Activated CD8-positive, alpha-beta T cell treated with anti-CD3 and anti-CD28 coated beads for 36 hours (primary cell): ENCODE measurements at regions of chr10 and their contacts with region 1.

Region 1: DNA sequence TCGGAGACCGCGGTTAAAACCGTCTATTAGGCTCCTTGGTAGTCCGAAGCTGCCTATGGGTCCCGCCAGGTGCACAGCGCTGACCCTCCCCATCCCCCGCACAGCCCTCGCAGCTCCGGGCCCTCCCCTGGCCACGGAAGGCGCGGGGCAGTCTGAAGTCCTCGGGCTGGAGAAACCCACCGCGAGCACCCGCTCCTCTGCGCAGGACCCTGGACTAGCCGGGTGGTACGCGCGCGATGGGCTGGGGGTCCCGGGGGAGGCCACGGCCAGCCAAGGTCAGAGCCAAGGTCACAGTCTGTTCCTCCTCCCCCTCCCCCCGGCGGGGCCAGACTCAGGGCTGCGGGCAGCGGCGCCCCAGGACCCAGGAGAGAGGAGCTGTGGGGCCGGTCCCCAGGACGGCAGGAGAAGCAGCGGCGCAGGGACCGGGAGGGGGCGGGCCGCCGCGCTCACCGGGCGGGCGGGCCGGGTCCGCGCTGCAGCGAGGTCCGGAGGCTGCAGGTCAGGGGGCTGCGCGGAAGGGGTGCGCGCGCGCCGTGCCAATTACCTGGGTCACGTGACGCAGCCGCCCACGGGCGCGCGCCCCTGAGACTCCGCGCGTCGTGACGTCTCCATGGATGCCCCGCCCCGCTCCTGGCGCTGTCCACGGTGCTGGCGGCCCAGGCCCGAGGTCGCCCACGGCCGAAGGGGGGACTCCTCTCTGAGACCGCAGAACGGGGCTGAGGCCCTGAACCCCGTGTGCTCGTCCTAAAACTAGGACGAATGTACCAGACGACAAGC is at the start of gene OGDHL:
- DNase-seq: peak; percentile 73
- ATAC-seq: peak; percentile 90
- H3K4me3 Mint-ChIP-seq: peak within 1 kb of the TSS; percentile 40
- H3K27ac Mint-ChIP-seq: no peak within 1 kb of the TSS
- H3K4me1 Mint-ChIP-seq: no peaks in the 10 kb centered on the region
- H3K27me3 Mint-ChIP-seq: peaks cover 34% of the 10 kb centered on the region
- CTCF ChIP-seq: no peak
- total RNA-seq, gene OGDHL: 0.40 to 0.68 TPM

Region 2: DNA sequence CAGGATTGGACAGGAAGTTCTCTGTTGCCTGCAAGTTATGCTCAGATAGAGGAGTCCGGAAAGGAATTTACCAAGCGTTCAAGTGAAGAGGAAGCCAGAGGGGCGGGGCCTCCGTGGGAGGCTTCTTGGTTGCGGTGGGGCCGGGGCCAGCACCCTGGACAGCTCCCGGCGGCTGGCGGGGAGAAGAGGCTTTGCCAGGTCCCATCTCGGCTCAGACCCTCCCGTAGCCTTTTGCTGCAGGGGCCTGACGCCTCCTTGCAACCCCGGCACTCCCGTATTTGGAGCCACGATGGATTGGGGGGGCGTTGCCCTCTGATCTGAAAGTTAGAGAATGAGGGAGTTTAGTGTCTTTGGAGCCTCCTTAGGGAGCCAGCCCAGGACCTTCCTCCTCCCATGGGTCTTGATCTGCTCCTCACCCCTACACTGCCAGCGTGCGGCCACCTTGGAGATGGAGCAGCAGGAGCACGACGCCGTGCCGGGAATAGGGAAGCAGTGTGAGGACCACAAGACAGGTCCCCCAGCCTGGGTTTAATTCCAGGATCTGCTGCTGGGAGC is 154.9 kb before region 1 on chr10:
- CTCF ChIA-PET with region 1: no interaction called
- POLR2A ChIA-PET with region 1: no interaction called
- intact Hi-C with region 1: loop called (anchors 10 kb)
- DNase-seq: peak; percentile 86
- ATAC-seq: peak; percentile 88
- H3K4me3 Mint-ChIP-seq: no peak overlapping the region
- H3K27ac Mint-ChIP-seq: no peak overlapping the region
- H3K4me1 Mint-ChIP-seq: no peaks in the 10 kb centered on the region
- H3K27me3 Mint-ChIP-seq: peaks cover 64% of the 10 kb centered on the region
- CTCF ChIP-seq: no peak